Calu3 (cell line): ENCODE measurements at regions of chr3 and their contacts with region 1.

Region 1: GRCh38 chr3:27681245-27681748 is 40.8 kb downstream of the EOMES start:
- DNase-seq: peak; percentile 57
- H3K4me3 Mint-ChIP-seq: peak overlapping the region; percentile 59
- H3K27ac Mint-ChIP-seq: peak overlapping the region; percentile 92
- H3K4me1 Mint-ChIP-seq: peaks cover 34% of the 10 kb centered on the region
- H3K27me3 Mint-ChIP-seq: no peaks in the 10 kb centered on the region
- CTCF ChIP-seq: peak; percentile 33

Region 2: DNA sequence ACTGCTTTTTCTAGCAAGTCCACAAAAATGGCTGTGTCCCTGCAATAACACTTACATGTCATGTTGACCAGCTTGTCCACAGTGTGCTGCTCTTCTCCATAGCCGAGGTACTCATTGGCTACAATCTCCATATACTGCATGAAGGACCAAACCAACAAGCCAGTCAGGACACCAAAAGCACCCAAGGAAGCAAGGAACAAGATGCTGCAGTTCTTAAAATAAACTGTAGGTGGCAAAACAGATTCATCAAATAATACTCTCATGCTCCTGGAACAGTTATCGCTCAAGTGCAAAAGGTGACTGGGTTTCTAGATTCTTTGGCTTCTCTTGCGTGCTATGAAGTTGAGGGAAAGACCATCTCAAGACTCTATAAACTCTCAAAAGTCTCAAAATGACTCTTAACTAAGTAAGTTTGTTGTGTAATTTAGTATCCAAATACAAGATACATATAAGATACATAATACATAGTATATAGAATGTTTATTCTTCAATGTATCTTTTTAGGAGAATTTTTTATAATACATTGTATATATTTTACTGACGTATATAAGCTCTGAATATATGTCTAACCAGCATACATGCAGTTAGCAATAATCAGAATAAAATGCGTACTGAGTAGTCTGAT is 369.1 kb before region 1 on chr3:
- CTCF ChIA-PET with region 1: no interaction called
- intact Hi-C with region 1: loop called (anchors 2 kb)
- DNase-seq: peak; percentile 26
- H3K4me3 Mint-ChIP-seq: no peak overlapping the region
- H3K27ac Mint-ChIP-seq: no peak overlapping the region
- H3K4me1 Mint-ChIP-seq: no peaks in the 10 kb centered on the region
- H3K27me3 Mint-ChIP-seq: no peaks in the 10 kb centered on the region
- CTCF ChIP-seq: peak; percentile 50

Region 3: GRCh38 chr3:27467545-27467944 is 213.8 kb before region 1 on chr3:
- CTCF ChIA-PET with region 1: interaction called, 5 read pairs
- intact Hi-C with region 1: loop called (anchors 5 kb)
- DNase-seq: no peak
- H3K4me3 Mint-ChIP-seq: no peak overlapping the region
- H3K27ac Mint-ChIP-seq: no peak overlapping the region
- H3K4me1 Mint-ChIP-seq: no peaks in the 10 kb centered on the region
- H3K27me3 Mint-ChIP-seq: no peaks in the 10 kb centered on the region
- CTCF ChIP-seq: no peak

Region 4: DNA sequence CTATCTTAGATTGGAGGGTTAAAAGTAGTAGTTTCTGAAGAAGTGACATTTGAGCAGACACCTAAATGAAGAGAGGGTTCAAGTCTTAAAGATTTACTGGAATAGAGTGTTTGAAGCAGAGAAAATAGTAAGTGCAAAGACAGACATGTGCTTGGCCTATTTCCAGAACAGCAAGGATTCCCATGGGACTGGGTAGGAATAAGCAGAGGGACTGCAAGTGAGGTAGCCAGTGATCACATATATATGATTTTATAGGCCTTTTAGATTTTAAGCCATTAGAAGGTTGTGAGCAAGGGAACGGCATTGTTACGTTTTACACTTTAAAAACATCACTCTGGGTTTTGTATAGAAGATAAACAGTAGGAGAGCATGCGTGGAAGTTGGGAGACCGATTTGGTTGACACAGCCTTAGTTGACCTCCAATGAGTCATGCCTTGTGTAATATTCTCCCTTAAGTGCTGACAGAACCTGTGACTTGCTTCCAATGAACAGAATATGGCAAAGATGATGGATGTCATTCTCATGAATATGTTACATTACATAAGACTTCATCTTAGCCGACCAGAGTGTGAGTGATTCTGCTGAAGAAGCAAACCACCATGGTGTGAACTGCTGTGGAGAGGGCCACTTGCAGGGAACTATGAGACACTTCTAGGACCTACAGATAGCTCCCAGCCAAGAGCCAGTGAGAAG is 160.0 kb before region 1 on chr3:
- CTCF ChIA-PET with region 1: interaction called, 4 read pairs
- intact Hi-C with region 1: loop called (anchors 10 kb)
- DNase-seq: peak; percentile 25
- H3K4me3 Mint-ChIP-seq: no peak overlapping the region
- H3K27ac Mint-ChIP-seq: no peak overlapping the region
- H3K4me1 Mint-ChIP-seq: peaks cover 35% of the 10 kb centered on the region
- H3K27me3 Mint-ChIP-seq: no peaks in the 10 kb centered on the region
- CTCF ChIP-seq: no peak

Region 5: DNA sequence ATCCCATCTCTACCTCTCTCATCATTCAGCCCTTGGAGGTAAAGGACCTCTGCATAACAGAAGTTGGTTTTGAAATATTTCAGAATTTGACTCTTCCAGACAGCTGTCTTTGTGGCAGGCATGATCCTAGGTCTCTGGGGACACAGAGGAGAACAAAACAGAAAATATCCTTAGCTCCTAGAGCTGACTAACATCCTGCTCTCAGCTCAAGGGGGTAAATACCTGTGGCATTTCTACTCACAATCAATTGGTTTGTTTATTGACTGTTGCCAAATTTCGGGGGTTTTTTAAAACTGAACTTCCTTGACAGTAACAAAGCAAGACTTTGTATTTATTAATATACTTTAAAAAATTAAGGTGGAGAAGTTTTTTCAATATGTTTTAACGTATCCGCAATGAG is 37.9 kb before region 1 on chr3:
- CTCF ChIA-PET with region 1: interaction called, 6 read pairs
- intact Hi-C with region 1: loop called (anchors 5 kb)
- DNase-seq: peak; percentile 38
- H3K4me3 Mint-ChIP-seq: peak overlapping the region; percentile 36
- H3K27ac Mint-ChIP-seq: peak overlapping the region; percentile 73
- H3K4me1 Mint-ChIP-seq: peaks cover 38% of the 10 kb centered on the region
- H3K27me3 Mint-ChIP-seq: no peaks in the 10 kb centered on the region
- CTCF ChIP-seq: no peak

Region 6: GRCh38 chr3:27659279-27660021 is 21.8 kb before region 1 on chr3:
- CTCF ChIA-PET with region 1: no interaction called
- intact Hi-C with region 1: no loop called
- DNase-seq: peak; percentile 75
- H3K4me3 Mint-ChIP-seq: no peak overlapping the region
- H3K27ac Mint-ChIP-seq: no peak overlapping the region
- H3K4me1 Mint-ChIP-seq: no peaks in the 10 kb centered on the region
- H3K27me3 Mint-ChIP-seq: no peaks in the 10 kb centered on the region
- CTCF ChIP-seq: peak; percentile 67